Activated CD8-positive, alpha-beta T cell treated with anti-CD3 and anti-CD28 coated beads, Interleukin-2, amount 10 ng/mL, durations not matched to agents 7 days and 5 days (primary cell): ENCODE measurements at regions of chr14 and their contacts with region 1.

Region 1: GRCh38 chr14:24093901-24094761 is at the start of gene PCK2:
- DNase-seq: peak; percentile 84
- ATAC-seq: peak; percentile 80
- H3K4me3 Mint-ChIP-seq: peak within 1 kb of the TSS; percentile 100
- H3K27ac Mint-ChIP-seq: peak within 1 kb of the TSS; percentile 99
- H3K4me1 Mint-ChIP-seq: peaks cover 42% of the 10 kb centered on the region
- H3K27me3 Mint-ChIP-seq: no peaks in the 10 kb centered on the region
- total RNA-seq, gene PCK2: 49.6 to 54.9 TPM

Region 2: GRCh38 chr14:24080888-24081738 is 13.0 kb before region 1 on chr14:
- CTCF ChIA-PET with region 1: interaction called, 117 read pairs
- POLR2A ChIA-PET with region 1: interaction called, 41 read pairs
- DNase-seq: peak; percentile 89
- ATAC-seq: peak; percentile 94
- H3K4me3 Mint-ChIP-seq: peak overlapping the region; percentile 76
- H3K27ac Mint-ChIP-seq: peak overlapping the region; percentile 86
- H3K4me1 Mint-ChIP-seq: peaks cover 33% of the 10 kb centered on the region
- H3K27me3 Mint-ChIP-seq: no peaks in the 10 kb centered on the region

Region 3: GRCh38 chr14:24141097-24141880 is 47.2 kb after region 1 on chr14 and contains the start of gene EMC9:
- CTCF ChIA-PET with region 1: interaction called, 5 read pairs
- POLR2A ChIA-PET with region 1: interaction called, 10 read pairs
- DNase-seq: peak; percentile 100
- ATAC-seq: peak; percentile 92
- H3K4me3 Mint-ChIP-seq: peak within 1 kb of the TSS; percentile 97
- H3K27ac Mint-ChIP-seq: peak within 1 kb of the TSS; percentile 77
- H3K4me1 Mint-ChIP-seq: peaks cover 66% of the 10 kb centered on the region
- H3K27me3 Mint-ChIP-seq: no peaks in the 10 kb centered on the region
- total RNA-seq, gene EMC9: 49.9 to 53.2 TPM